ENCODE measurements at regions of chr17 and their contacts with region 1.

Region 1: GRCh38 chr17:44533533-44534246 is 23.6 kb upstream of the FZD2 start:
- H3K4me3 Mint-ChIP-seq: peak overlapping the region; percentile 55
- H3K27ac Mint-ChIP-seq: peak overlapping the region; percentile 90
- H3K4me1 Mint-ChIP-seq: peaks cover 74% of the 10 kb centered on the region
- H3K27me3 Mint-ChIP-seq: no peaks in the 10 kb centered on the region

Region 2: GRCh38 chr17:44503147-44504029 is 30.3 kb before region 1 on chr17 and contains the start of gene GPATCH8:
- intact Hi-C with region 1: no loop called
- H3K4me3 Mint-ChIP-seq: peak within 1 kb of the TSS; percentile 90
- H3K27ac Mint-ChIP-seq: peak within 1 kb of the TSS; percentile 88
- H3K4me1 Mint-ChIP-seq: peaks cover 16% of the 10 kb centered on the region
- H3K27me3 Mint-ChIP-seq: peaks cover 8% of the 10 kb centered on the region

Region 3: DNA sequence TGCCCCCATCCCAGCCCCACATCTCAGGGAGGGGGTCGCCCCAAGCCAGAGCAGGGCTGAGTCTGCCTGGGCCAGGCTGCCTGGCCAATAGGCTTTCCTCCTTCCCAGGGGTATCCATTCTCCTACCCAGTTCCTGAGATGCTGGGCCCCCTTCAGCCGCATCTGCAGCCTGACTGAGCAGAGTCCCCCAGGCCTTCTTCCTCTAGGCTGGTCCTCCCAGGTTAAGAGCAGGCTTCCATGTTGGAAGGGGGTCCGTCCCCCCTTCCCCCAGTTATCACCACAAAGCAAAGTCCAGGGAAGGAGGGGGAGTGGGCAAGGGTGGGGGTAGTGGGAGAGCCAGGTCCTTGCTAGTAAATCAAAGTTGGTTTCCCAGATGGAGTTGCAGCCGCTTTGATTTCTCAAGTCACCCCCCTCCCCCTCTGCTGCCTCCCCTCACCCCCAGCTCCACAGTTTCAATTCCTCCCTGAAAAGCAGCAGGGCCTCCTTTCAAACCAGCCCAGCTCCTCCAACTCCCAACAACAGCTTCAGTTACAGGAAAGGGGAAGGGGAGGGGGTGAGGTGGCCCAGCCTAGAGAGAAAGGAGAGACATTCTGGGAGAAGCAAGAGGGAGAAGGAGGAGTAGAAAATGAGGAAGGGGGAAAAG is 14.1 kb after region 1 on chr17:
- intact Hi-C with region 1: loop called (anchors 2 kb)
- H3K4me3 Mint-ChIP-seq: peak overlapping the region; percentile 78
- H3K27ac Mint-ChIP-seq: peak overlapping the region; percentile 93
- H3K4me1 Mint-ChIP-seq: peaks cover 92% of the 10 kb centered on the region
- H3K27me3 Mint-ChIP-seq: no peaks in the 10 kb centered on the region

Region 4: GRCh38 chr17:44555099-44555498 is 21.4 kb after region 1 on chr17:
- intact Hi-C with region 1: loop called (anchors 2 kb)
- H3K4me3 Mint-ChIP-seq: no peak overlapping the region
- H3K27ac Mint-ChIP-seq: no peak overlapping the region
- H3K4me1 Mint-ChIP-seq: peaks cover 56% of the 10 kb centered on the region
- H3K27me3 Mint-ChIP-seq: peaks cover 3% of the 10 kb centered on the region

Region 5: DNA sequence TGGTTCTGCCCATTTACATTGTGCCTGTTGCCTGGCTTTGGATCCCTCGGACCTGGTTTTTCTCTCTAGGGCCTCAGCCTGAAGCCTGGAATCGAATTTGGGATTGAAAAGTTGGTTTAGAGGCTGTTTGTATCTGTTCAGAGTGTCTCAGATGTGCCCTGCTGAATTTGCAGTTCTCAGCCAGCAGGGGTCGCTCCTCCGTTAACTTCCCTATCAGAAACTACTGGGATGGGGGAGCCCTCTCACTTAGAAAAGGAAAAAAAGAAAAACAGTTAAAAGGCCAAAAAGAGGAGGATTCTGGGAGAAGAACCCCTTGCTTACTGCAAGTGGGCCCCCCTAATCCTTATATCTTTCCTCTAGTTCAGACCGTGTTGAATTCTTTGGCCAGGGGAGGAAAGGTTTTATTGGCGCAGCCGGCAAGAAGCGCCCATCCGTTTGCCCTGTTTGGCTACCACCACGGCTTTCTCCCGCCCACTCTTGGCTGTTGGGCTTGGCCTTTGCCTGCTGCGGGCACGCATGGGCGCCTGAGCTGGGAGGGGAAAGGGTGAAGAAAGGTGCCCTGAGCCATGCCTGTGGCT is 32.3 kb after region 1 on chr17:
- intact Hi-C with region 1: loop called (anchors 5 kb)
- H3K4me3 Mint-ChIP-seq: no peak overlapping the region
- H3K27ac Mint-ChIP-seq: no peak overlapping the region
- H3K4me1 Mint-ChIP-seq: peaks cover 24% of the 10 kb centered on the region
- H3K27me3 Mint-ChIP-seq: peaks cover 20% of the 10 kb centered on the region

Region 6: GRCh38 chr17:44636562-44636961 is 102.9 kb after region 1 on chr17:
- intact Hi-C with region 1: loop called (anchors 1 kb)
- H3K4me3 Mint-ChIP-seq: no peak overlapping the region
- H3K27ac Mint-ChIP-seq: no peak overlapping the region
- H3K4me1 Mint-ChIP-seq: peaks cover 5% of the 10 kb centered on the region
- H3K27me3 Mint-ChIP-seq: peaks cover 4% of the 10 kb centered on the region